Activated naive CD4-positive, alpha-beta T cell treated with anti-CD3 and anti-CD28 coated beads for 36 hours (primary cell): ENCODE measurements at regions of chr13 and their contacts with region 1.

Region 1: DNA sequence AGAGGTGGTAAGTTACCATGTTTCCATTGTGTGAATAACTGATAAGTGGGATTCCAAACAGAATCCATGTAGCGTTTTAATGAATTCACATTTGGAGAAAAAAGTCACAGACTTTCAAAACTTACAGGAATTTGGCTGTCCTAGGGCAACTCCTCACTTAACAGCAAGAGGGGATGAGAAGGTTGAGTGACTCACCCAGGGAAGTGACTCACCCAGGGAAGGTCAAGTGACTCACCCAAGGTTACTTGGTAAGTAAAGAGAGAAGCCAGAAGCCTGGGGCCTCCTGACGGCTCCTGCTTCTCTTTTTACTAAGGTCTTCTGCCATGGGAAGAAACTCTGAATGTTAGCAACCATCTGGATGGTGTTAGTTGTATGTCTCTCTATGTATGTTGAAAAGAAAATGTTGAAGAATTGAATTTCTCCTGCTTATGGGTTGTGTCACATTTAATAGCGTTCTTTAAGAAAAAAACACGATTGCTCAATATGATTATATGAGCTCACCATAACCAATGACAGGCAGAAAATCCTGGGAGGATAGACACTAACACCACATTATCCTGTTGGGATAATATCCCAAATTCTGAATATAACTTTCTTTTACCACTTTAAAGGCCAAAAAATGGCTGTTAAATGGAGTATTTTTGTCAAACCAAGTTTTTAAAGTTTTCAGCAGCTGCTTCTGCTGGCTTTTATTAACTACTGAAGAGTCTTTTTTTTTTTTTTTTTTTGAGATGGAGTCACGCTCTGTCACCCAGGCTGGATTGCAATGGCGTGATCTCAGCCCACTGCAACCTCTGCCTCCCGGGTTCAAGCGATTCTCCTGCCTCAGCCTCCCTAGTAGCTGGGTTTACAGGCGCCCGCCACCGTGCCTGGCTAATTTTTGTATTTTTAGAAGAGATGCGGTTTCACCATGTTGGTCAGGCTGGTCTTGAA is 195.6 kb downstream of the GGACT start:
- DNase-seq: peak; percentile 88
- H3K4me3 Mint-ChIP-seq: no peak overlapping the region
- H3K27ac Mint-ChIP-seq: no peak overlapping the region
- H3K4me1 Mint-ChIP-seq: peaks cover 24% of the 10 kb centered on the region
- H3K27me3 Mint-ChIP-seq: no peaks in the 10 kb centered on the region

Region 2: DNA sequence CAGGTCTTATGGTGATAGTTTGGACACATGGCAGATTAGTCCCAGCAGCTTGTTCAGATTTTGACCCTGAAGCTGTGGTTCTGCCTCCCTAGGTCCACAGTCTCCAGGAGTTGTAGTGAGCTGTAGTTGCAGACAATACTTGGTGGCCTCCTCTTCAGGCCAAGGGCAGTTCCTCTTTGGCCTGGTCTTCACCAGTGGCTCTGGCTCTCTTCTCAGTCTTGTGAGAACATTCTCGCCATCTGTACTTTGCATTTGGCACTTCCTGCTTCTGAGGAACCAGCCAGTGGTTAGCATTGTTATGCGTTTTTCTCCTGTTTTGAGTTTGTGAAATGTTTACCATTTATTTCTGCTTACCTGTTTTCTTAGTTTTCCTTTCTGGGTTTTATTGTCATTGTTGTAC is 263.4 kb before region 1 on chr13:
- CTCF ChIA-PET with region 1: no interaction called
- intact Hi-C with region 1: loop called (anchors 1 kb)
- DNase-seq: no peak
- H3K4me3 Mint-ChIP-seq: no peak overlapping the region
- H3K27ac Mint-ChIP-seq: no peak overlapping the region
- H3K4me1 Mint-ChIP-seq: peaks cover 23% of the 10 kb centered on the region
- H3K27me3 Mint-ChIP-seq: no peaks in the 10 kb centered on the region

Region 3: GRCh38 chr13:100203696-100204367 is 189.1 kb before region 1 on chr13:
- CTCF ChIA-PET with region 1: interaction called, 3 read pairs
- intact Hi-C with region 1: loop called (anchors 5 kb)
- DNase-seq: peak; percentile 8
- H3K4me3 Mint-ChIP-seq: no peak overlapping the region
- H3K27ac Mint-ChIP-seq: peak overlapping the region; percentile 47
- H3K4me1 Mint-ChIP-seq: peaks cover 17% of the 10 kb centered on the region
- H3K27me3 Mint-ChIP-seq: no peaks in the 10 kb centered on the region

Region 4: DNA sequence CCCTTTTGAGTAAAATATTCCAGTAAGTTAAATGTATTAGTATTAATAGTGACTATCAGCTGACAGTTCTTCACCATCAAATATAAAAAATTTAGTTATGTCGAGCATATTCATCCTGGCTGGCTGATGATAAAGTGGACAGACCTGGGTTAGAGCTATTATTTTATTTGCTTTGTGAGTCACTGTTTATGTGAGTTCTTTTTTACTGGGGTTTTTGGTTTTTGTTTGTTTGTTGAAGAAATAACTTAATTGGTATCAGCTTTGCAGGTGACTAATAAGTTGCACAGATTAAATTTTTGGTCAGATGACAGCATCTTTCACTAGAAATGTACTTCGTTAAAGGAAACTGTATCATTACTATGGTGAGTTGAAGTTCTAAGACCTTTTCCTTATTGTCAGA is 29.1 kb before region 1 on chr13:
- CTCF ChIA-PET with region 1: no interaction called
- intact Hi-C with region 1: loop called (anchors 1 kb)
- DNase-seq: no peak
- H3K4me3 Mint-ChIP-seq: no peak overlapping the region
- H3K27ac Mint-ChIP-seq: no peak overlapping the region
- H3K4me1 Mint-ChIP-seq: no peaks in the 10 kb centered on the region
- H3K27me3 Mint-ChIP-seq: no peaks in the 10 kb centered on the region

Region 5: GRCh38 chr13:100382785-100383184 is 10.2 kb before region 1 on chr13:
- CTCF ChIA-PET with region 1: no interaction called
- intact Hi-C with region 1: no loop called
- DNase-seq: no peak
- H3K4me3 Mint-ChIP-seq: no peak overlapping the region
- H3K27ac Mint-ChIP-seq: no peak overlapping the region
- H3K4me1 Mint-ChIP-seq: no peaks in the 10 kb centered on the region
- H3K27me3 Mint-ChIP-seq: no peaks in the 10 kb centered on the region

Region 6: GRCh38 chr13:100423375-100423774 is 30.4 kb after region 1 on chr13:
- CTCF ChIA-PET with region 1: no interaction called
- intact Hi-C with region 1: loop called (anchors 1 kb)
- DNase-seq: no peak
- H3K4me3 Mint-ChIP-seq: no peak overlapping the region
- H3K27ac Mint-ChIP-seq: peak overlapping the region; percentile 61
- H3K4me1 Mint-ChIP-seq: peaks cover 7% of the 10 kb centered on the region
- H3K27me3 Mint-ChIP-seq: no peaks in the 10 kb centered on the region

Region 7: DNA sequence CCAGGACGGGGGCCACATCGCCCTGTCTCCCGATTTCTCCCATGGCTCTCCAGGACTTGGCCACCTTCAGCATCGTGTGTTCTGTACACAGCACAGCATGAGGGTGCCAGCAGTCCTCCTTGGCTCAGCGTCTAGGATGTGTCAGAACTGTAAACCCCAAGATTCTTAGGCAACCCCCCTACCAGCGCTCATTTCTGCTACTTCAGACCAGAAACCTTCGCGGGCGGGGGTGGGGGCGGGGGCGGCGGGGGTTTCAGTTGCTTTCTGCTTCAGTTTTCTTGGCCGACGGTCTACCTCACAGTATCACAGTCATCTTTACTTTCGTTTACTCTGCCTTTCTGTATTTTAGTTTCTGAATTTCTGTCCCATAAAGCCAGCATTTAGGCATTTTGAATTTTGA is 113.2 kb after region 1 on chr13:
- CTCF ChIA-PET with region 1: no interaction called
- intact Hi-C with region 1: loop called (anchors 1 kb)
- DNase-seq: peak; percentile 59
- H3K4me3 Mint-ChIP-seq: peak overlapping the region; percentile 4
- H3K27ac Mint-ChIP-seq: no peak overlapping the region
- H3K4me1 Mint-ChIP-seq: peaks cover 14% of the 10 kb centered on the region
- H3K27me3 Mint-ChIP-seq: peaks cover 8% of the 10 kb centered on the region

Region 8: GRCh38 chr13:100588331-100589177 is 195.6 kb after region 1 on chr13 and contains the start of gene GGACT:
- CTCF ChIA-PET with region 1: no interaction called
- intact Hi-C with region 1: loop called (anchors 2 kb)
- DNase-seq: peak; percentile 84
- H3K4me3 Mint-ChIP-seq: peak within 1 kb of the TSS; percentile 75
- H3K27ac Mint-ChIP-seq: peak within 1 kb of the TSS; percentile 87
- H3K4me1 Mint-ChIP-seq: peaks cover 39% of the 10 kb centered on the region
- H3K27me3 Mint-ChIP-seq: no peaks in the 10 kb centered on the region
- total RNA-seq, gene GGACT: 3.9 to 6.6 TPM